ENCODE measurements at regions of chr15 and their contacts with region 1.

Region 1: DNA sequence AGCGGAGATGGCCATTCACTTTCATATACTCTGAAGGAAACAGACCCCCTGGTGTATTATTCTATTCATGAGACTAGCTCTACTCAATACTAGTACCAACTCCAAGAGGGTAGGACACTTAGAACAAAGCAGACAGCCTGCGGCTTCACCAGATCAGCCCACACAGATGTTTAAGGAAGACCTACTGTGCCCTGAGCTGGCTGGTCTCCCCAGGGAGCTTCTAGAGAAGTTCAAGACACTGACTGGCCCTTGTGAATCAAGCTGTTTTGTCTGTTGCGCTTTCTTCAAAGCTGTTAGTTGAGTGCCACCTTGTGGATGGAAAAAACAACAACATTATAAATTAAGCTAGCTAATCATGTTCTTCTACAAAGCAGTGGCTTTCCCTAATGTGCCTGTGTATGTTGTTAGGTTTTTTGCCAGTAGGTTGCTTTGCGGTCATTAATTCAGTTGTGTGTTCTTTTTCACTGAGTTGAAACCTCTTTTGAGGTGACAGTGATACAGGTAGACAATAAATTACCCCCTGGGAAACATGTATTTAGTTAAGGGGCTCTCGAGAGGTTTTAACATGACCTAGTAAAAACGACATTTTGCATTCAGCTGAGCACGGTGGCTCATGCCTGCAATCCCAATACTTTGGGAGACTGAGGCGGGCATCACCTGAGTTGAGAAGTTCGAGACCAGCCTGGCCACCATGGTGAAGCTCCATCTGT is 64.2 kb upstream of the MYZAP start:
- DNase-seq: peak; percentile 81
- H3K4me3 Mint-ChIP-seq: no peak overlapping the region
- H3K27ac Mint-ChIP-seq: no peak overlapping the region
- H3K4me1 Mint-ChIP-seq: no peaks in the 10 kb centered on the region
- H3K27me3 Mint-ChIP-seq: peaks cover 2% of the 10 kb centered on the region
- CTCF ChIP-seq: peak; percentile 63

Region 2: DNA sequence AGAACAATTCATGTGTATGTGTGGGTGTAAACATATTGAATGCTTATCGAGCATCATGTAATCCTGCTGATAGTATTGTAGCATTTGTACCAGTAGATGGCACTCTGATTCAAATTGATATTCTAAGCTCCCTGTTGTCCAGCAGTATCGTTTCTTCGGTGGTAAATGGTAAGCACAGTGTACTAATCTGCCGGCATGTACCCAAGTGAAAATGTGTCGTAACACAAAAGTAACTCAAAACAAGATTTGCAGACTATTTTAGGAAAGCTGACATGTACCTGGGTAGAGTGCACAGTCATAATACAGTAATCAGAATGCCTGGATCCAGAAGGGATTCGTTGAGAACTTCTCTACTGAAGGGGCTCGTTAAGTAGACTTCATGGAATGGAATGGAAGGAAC is 1030.9 kb before region 1 on chr15:
- CTCF ChIA-PET with region 1: interaction called, 20 read pairs
- POLR2A ChIA-PET with region 1: no interaction called
- intact Hi-C with region 1: loop called (anchors 2 kb)
- DNase-seq: peak; percentile 71
- H3K4me3 Mint-ChIP-seq: no peak overlapping the region
- H3K27ac Mint-ChIP-seq: no peak overlapping the region
- H3K4me1 Mint-ChIP-seq: peaks cover 5% of the 10 kb centered on the region
- H3K27me3 Mint-ChIP-seq: peaks cover 14% of the 10 kb centered on the region
- CTCF ChIP-seq: peak; percentile 64

Region 3: GRCh38 chr15:57146506-57147201 is 380.9 kb before region 1 on chr15:
- CTCF ChIA-PET with region 1: interaction called, 40 read pairs
- POLR2A ChIA-PET with region 1: no interaction called
- intact Hi-C with region 1: loop called (anchors 1 kb)
- DNase-seq: peak; percentile 54
- H3K4me3 Mint-ChIP-seq: no peak overlapping the region
- H3K27ac Mint-ChIP-seq: no peak overlapping the region
- H3K4me1 Mint-ChIP-seq: peaks cover 27% of the 10 kb centered on the region
- H3K27me3 Mint-ChIP-seq: no peaks in the 10 kb centered on the region
- CTCF ChIP-seq: peak; percentile 69

Region 4: GRCh38 chr15:57375827-57376695 is 151.5 kb before region 1 on chr15 and contains the start of gene CGNL1:
- CTCF ChIA-PET with region 1: interaction called, 20 read pairs
- POLR2A ChIA-PET with region 1: no interaction called
- intact Hi-C with region 1: no loop called
- DNase-seq: no peak
- H3K4me3 Mint-ChIP-seq: peak within 1 kb of the TSS; percentile 66
- H3K27ac Mint-ChIP-seq: no peak within 1 kb of the TSS
- H3K4me1 Mint-ChIP-seq: no peaks in the 10 kb centered on the region
- H3K27me3 Mint-ChIP-seq: peaks cover 65% of the 10 kb centered on the region
- CTCF ChIP-seq: no peak
- total RNA-seq, gene CGNL1: 0.05 TPM in 1 of 2 replicates, not detected in the other

Region 5: GRCh38 chr15:57516327-57517031 is 11.1 kb before region 1 on chr15:
- CTCF ChIA-PET with region 1: interaction called, 65 read pairs
- POLR2A ChIA-PET with region 1: no interaction called
- intact Hi-C with region 1: no loop called
- DNase-seq: no peak
- H3K4me3 Mint-ChIP-seq: no peak overlapping the region
- H3K27ac Mint-ChIP-seq: no peak overlapping the region
- H3K4me1 Mint-ChIP-seq: no peaks in the 10 kb centered on the region
- H3K27me3 Mint-ChIP-seq: no peaks in the 10 kb centered on the region
- CTCF ChIP-seq: no peak

Measured in MCF 10A (cell line).